ENCODE measurements at regions of chr5 and their contacts with region 1.

Region 1: DNA sequence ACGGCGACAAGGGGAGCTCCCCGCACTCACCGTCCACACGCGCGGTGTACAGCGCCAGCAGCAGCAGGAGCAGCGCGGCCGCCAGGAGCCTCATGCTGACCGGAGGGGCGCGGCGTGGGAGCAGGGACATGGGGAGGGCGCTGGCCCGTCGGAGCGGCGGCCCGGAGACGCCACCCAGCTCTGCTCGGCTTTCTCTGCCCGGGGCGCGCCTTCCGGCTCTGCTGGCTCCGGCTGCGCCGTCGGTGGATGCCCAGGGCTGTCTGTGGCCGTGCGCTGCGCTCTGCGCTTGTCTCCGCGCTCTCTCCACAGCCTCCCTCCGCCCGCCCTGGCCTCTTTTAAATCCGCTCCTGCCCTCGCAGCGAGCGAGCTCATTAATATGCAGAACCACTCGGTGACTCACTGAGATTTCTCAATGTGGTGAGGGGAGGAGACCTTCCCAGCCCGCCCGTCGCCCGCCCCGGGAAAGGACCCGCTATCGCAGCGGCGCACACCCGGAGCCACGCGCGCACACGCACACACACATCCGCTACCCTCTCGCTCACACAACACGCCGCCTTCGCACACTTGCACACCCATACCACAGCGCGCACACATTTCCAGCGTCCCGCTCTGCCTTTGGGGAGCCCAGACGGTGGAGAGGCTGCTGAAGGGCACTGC is at the start of gene CXCL14:
- DNase-seq: no peak
- H3K4me3 ChIP-seq: no peak within 1 kb of the TSS
- H3K27ac ChIP-seq: no peak within 1 kb of the TSS
- H3K4me1 ChIP-seq: no peaks in the 10 kb centered on the region
- H3K27me3 ChIP-seq: peaks cover 57% of the 10 kb centered on the region
- CTCF ChIP-seq: no peak
- EP300 ChIP-seq: no peak
- RAD21 ChIP-seq: no peak
- polyA plus RNA-seq, gene CXCL14: 0.05 and 0.08 TPM in 2 replicates

Region 2: DNA sequence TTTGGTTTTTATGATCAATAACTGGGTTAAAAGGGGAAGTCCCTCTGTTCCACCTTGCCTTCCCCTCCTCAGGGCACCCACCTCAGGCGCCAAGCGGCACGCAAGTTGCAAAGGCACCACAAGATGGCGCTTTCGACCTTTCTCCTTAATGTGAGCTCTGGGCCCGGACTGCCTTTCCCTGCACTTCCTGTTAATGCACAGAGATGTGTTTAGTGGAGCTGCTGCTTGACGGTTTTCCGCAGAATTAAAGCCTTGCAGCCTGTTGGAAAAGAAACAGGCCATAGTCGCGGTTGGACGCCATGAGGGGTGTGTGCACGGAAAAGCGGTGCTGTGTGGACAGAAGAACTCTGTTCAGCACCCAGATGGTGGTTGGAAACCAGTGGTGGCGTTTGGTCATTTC is 18.0 kb before region 1 on chr5:
- CTCF ChIA-PET with region 1: interaction called, 68 read pairs
- POLR2A ChIA-PET with region 1: no interaction called
- DNase-seq: peak; percentile 81
- H3K4me3 ChIP-seq: peak overlapping the region in 1 of 2 experiments; percentile 22; a peak in 1 of 4 replicates
- H3K27ac ChIP-seq: no peak overlapping the region
- H3K4me1 ChIP-seq: no peaks in the 10 kb centered on the region; a peak in 1 of 4 replicates
- H3K27me3 ChIP-seq: peaks cover 21% of the 10 kb centered on the region
- CTCF ChIP-seq: peak; percentile 84
- EP300 ChIP-seq: no peak
- RAD21 ChIP-seq: peak; percentile 85

Region 3: GRCh38 chr5:135565725-135566421 is 12.9 kb before region 1 on chr5:
- CTCF ChIA-PET with region 1: interaction called, 68 read pairs
- POLR2A ChIA-PET with region 1: no interaction called
- DNase-seq: peak; percentile 60
- H3K4me3 ChIP-seq: no peak overlapping the region; a peak in 1 of 4 replicates
- H3K27ac ChIP-seq: no peak overlapping the region
- H3K4me1 ChIP-seq: no peaks in the 10 kb centered on the region; a peak in 1 of 4 replicates
- H3K27me3 ChIP-seq: peaks cover 5% of the 10 kb centered on the region; the same call in 1 of the 2 replicates
- CTCF ChIP-seq: peak; percentile 83
- EP300 ChIP-seq: no peak
- RAD21 ChIP-seq: peak; percentile 29; the same call in 1 of the 2 replicates

Region 4: GRCh38 chr5:135591277-135591676 is 12.5 kb after region 1 on chr5:
- CTCF ChIA-PET with region 1: no interaction called
- POLR2A ChIA-PET with region 1: no interaction called
- DNase-seq: no peak
- H3K4me3 ChIP-seq: no peak overlapping the region
- H3K27ac ChIP-seq: no peak overlapping the region
- H3K4me1 ChIP-seq: no peaks in the 10 kb centered on the region; a peak in 1 of 4 replicates
- H3K27me3 ChIP-seq: peaks cover 21% of the 10 kb centered on the region
- CTCF ChIP-seq: no peak
- EP300 ChIP-seq: no peak
- RAD21 ChIP-seq: no peak

Measured in SK-N-SH (cell line).